ENCODE measurements at regions of chr17 and their contacts with region 1.

Region 1: DNA sequence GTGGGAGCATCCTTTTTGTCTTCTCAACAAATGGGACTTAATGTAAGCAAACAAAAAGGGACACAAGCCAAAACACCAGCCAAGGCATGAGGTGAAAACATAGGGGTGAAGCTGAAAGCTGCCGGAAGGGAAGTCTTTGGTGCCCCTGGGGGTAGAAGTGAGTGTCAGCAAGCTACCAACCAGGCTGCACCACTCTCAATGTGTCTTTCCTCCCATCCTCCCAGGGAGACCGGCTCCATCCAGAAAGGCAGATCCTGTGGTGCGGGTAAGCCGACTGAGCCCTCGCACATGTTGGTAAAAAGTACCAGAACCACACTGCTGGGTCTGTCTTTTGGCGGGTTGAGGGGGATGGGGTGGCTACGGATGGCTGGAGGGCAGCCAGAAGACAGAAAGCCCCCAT is 52.0 kb upstream of the SREBF1 start:
- DNase-seq: no peak
- ATAC-seq: no peak
- H3K4me3 ChIP-seq: no peak overlapping the region
- H3K4me1 ChIP-seq: no peaks in the 10 kb centered on the region
- CTCF ChIP-seq: no peak

Region 2: GRCh38 chr17:17812211-17813057 is 76.4 kb before region 1 on chr17:
- intact Hi-C with region 1: no loop called
- DNase-seq: peak in 2 of 3 donors; percentile 80 to 84
- ATAC-seq: peak; percentile 64
- H3K4me3 ChIP-seq: no peak overlapping the region
- H3K4me1 ChIP-seq: peaks cover 4% of the 10 kb centered on the region
- CTCF ChIP-seq: peak; percentile 93

Region 3: DNA sequence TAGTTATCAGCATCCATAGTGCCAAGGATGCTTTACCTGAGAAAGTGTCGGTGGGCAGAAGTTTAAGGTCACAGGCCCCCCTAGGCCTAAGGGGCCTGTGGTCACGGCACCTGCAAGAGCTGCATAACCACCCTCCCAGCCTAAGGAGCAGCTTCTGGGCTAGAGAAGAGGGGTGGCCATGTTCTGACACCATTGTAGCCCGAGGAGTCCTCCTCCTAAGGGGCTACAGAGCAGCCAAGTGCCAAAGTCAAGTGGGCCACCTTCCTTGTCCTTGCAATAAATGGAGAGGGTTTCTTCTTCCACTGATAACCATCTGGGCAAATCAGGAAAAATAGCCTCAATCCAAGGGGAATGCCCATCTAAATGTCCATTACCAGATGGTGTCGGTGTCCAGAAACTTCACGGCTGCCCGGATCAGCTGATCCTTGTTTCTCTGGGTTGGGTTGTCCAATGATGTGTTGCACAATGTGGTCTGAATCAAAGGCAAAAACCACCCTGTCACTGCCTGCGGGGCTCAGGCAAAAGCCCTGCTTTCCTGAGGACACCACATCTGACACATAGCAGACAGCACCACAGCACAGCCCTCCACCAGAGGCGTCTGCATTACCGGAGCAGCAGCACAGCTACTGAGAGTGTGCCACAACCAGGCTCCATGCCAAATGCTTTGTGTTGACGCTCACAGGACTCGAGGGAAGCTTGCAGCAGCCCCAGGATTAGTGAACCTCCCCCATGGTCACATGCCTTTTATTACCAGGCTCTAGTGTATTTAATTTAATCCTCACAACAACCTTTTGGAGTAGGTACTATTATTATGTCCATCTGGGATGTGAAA is 137.3 kb after region 1 on chr17:
- intact Hi-C with region 1: loop called in 1 of 2 experiments (anchors 10 kb)
- DNase-seq: no peak
- ATAC-seq: peak; percentile 27
- H3K4me3 ChIP-seq: no peak overlapping the region
- H3K4me1 ChIP-seq: no peaks in the 10 kb centered on the region
- CTCF ChIP-seq: no peak

Region 4: GRCh38 chr17:18314059-18314730 is 425.4 kb after region 1 on chr17:
- intact Hi-C with region 1: no loop called
- DNase-seq: peak in 1 of 3 donors; percentile 13
- ATAC-seq: peak; percentile 7
- H3K4me3 ChIP-seq: peak overlapping the region; percentile 85
- H3K4me1 ChIP-seq: peaks cover 48% of the 10 kb centered on the region
- CTCF ChIP-seq: no peak